AG04450 (cell line): ENCODE measurements at regions of chr11 and their contacts with region 1.

Region 1: GRCh38 chr11:94602430-94603372 is 35.5 kb downstream of the PIWIL4 start:
- DNase-seq: peak; percentile 81
- H3K4me3 ChIP-seq: no peak overlapping the region
- H3K27ac ChIP-seq: no peak overlapping the region
- H3K27me3 ChIP-seq: no peaks in the 10 kb centered on the region
- CTCF ChIP-seq: peak; percentile 78

Region 2: GRCh38 chr11:94417386-94417987 is 185.2 kb before region 1 on chr11:
- CTCF ChIA-PET with region 1: no interaction called
- POLR2A ChIA-PET with region 1: no interaction called
- DNase-seq: peak; percentile 38
- H3K4me3 ChIP-seq: no peak overlapping the region
- H3K27ac ChIP-seq: no peak overlapping the region
- H3K27me3 ChIP-seq: no peaks in the 10 kb centered on the region
- CTCF ChIP-seq: peak; percentile 77

Region 3: GRCh38 chr11:94452988-94453387 is 149.7 kb before region 1 on chr11:
- CTCF ChIA-PET with region 1: no interaction called
- POLR2A ChIA-PET with region 1: no interaction called
- DNase-seq: no peak
- H3K4me3 ChIP-seq: no peak overlapping the region
- H3K27ac ChIP-seq: no peak overlapping the region
- H3K27me3 ChIP-seq: no peaks in the 10 kb centered on the region
- CTCF ChIP-seq: no peak

Region 4: GRCh38 chr11:94519478-94520084 is 83.1 kb before region 1 on chr11:
- CTCF ChIA-PET with region 1: interaction called, 212 read pairs
- POLR2A ChIA-PET with region 1: interaction called, 3 read pairs
- DNase-seq: no peak
- H3K4me3 ChIP-seq: no peak overlapping the region
- H3K27ac ChIP-seq: no peak overlapping the region
- H3K27me3 ChIP-seq: peaks cover 16% of the 10 kb centered on the region
- CTCF ChIP-seq: peak; percentile 65

Region 5: DNA sequence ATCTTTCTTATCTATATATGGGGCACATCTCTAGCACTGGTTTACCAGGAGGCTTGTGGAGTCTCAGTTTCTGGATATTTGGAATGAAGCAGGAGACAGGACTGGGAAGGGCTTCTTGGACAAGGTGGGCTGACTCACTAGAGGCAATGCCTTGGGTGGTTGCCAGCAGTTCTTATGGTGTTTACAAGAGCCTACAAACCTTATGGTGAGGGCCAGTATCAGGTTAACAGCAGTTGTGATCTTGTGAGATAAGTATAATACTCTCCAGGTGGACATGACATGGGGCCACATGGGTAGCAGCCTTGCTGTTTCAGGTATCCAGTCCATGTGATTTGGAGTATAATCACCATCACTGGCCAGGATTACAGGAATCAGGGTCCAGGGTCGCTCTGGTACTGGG is 48.8 kb before region 1 on chr11:
- CTCF ChIA-PET with region 1: interaction called, 10 read pairs
- POLR2A ChIA-PET with region 1: interaction called, 8 read pairs
- DNase-seq: peak; percentile 68
- H3K4me3 ChIP-seq: no peak overlapping the region
- H3K27ac ChIP-seq: no peak overlapping the region
- H3K27me3 ChIP-seq: no peaks in the 10 kb centered on the region
- CTCF ChIP-seq: no peak

Region 6: GRCh38 chr11:94583866-94584500 is 18.7 kb before region 1 on chr11:
- CTCF ChIA-PET with region 1: interaction called, 31 read pairs
- POLR2A ChIA-PET with region 1: no interaction called
- DNase-seq: no peak
- H3K4me3 ChIP-seq: no peak overlapping the region
- H3K27ac ChIP-seq: no peak overlapping the region
- H3K27me3 ChIP-seq: no peaks in the 10 kb centered on the region
- CTCF ChIP-seq: no peak

Region 7: DNA sequence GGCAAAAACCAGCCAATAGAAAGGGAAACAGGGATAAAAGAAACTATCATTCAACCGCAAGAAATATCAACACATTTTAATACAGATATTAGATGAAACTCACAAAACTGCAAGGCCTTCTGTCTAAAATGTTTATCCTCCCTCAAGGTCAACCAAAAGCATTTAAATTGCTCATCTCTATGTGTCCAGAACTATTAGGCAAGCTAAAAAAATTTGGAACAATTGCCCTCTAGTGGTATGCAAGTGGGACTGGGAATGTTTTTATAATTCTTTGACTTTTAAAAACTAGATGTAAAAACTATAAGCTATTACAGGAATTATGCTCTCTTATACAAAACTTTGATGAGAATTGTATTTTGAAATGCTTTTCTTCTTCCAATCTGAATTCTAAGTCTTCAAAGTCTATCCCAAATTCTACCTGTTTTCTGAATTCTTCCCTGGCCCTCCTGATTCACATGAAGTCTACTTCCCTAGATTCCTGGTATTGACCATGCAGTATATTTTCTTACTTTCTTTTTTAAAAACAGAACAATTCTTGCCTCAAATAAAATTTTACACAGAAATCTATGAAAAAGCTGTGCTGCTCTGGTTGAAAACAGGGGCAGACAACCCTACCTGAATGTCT is 365.7 kb after region 1 on chr11:
- CTCF ChIA-PET with region 1: interaction called, 15 read pairs
- POLR2A ChIA-PET with region 1: no interaction called
- DNase-seq: no peak
- H3K4me3 ChIP-seq: no peak overlapping the region
- H3K27ac ChIP-seq: no peak overlapping the region
- H3K27me3 ChIP-seq: no peaks in the 10 kb centered on the region
- CTCF ChIP-seq: peak; percentile 74